A673 (cell line): ENCODE measurements at regions of chr7 and their contacts with region 1.

Region 1: GRCh38 chr7:11355399-11356005 is 381.8 kb downstream of the PHF14 start:
- DNase-seq: peak; percentile 64
- H3K4me3 ChIP-seq: no peak overlapping the region
- H3K27ac ChIP-seq: no peak overlapping the region
- H3K4me1 ChIP-seq: no peaks in the 10 kb centered on the region
- H3K27me3 ChIP-seq: peaks cover 27% of the 10 kb centered on the region
- CTCF ChIP-seq: no peak

Region 2: GRCh38 chr7:11313801-11314200 is 41.7 kb before region 1 on chr7:
- CTCF ChIA-PET with region 1: no interaction called
- POLR2A ChIA-PET with region 1: no interaction called
- intact Hi-C with region 1: loop called (anchors 5 kb)
- DNase-seq: no peak
- H3K4me3 ChIP-seq: no peak overlapping the region
- H3K27ac ChIP-seq: no peak overlapping the region
- H3K4me1 ChIP-seq: no peaks in the 10 kb centered on the region
- H3K27me3 ChIP-seq: no peaks in the 10 kb centered on the region
- CTCF ChIP-seq: no peak

Region 3: GRCh38 chr7:11548532-11548931 is 193.0 kb after region 1 on chr7:
- CTCF ChIA-PET with region 1: no interaction called
- POLR2A ChIA-PET with region 1: no interaction called
- intact Hi-C with region 1: no loop called
- DNase-seq: no peak
- H3K4me3 ChIP-seq: no peak overlapping the region
- H3K27ac ChIP-seq: no peak overlapping the region
- H3K4me1 ChIP-seq: peaks cover 12% of the 10 kb centered on the region
- H3K27me3 ChIP-seq: no peaks in the 10 kb centered on the region
- CTCF ChIP-seq: no peak